RWPE1 (cell line): ENCODE measurements at regions of chr14 and their contacts with region 1.

Region 1: GRCh38 chr14:61812761-61813606 is 50.8 kb downstream of the SNAPC1 start:
- DNase-seq: no peak
- H3K27ac ChIP-seq: no peak overlapping the region
- CTCF ChIP-seq: no peak

Region 2: DNA sequence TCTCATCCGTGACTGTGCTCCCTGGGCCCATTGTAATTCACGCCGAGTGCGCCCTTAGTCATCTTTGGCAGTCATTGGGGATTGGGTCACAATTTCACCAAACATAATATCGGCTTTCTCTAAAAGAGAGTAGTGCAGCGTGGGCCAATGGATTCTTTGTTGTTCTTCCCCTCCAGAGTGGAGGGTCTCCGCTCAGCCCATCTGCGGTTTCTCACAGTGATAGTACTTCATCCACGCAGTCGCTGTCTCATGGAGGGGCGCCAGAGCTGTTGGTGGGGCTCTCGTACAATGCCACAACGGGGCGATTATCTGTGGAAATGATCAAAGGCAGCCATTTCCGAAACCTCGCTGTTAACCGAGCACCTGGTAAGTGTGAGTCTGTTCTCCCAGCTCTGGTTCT is 271.0 kb after region 1 on chr14:
- CTCF ChIA-PET with region 1: no interaction called
- POLR2A ChIA-PET with region 1: no interaction called
- DNase-seq: no peak
- H3K27ac ChIP-seq: no peak overlapping the region
- CTCF ChIP-seq: no peak

Region 3: GRCh38 chr14:63535918-63536317 is 1722.9 kb after region 1 on chr14:
- CTCF ChIA-PET with region 1: interaction called, 10 read pairs
- POLR2A ChIA-PET with region 1: no interaction called
- DNase-seq: no peak
- H3K27ac ChIP-seq: no peak overlapping the region
- CTCF ChIP-seq: no peak